IMR-90 (cell line): ENCODE measurements at regions of chr4 and their contacts with region 1.

Region 1: DNA sequence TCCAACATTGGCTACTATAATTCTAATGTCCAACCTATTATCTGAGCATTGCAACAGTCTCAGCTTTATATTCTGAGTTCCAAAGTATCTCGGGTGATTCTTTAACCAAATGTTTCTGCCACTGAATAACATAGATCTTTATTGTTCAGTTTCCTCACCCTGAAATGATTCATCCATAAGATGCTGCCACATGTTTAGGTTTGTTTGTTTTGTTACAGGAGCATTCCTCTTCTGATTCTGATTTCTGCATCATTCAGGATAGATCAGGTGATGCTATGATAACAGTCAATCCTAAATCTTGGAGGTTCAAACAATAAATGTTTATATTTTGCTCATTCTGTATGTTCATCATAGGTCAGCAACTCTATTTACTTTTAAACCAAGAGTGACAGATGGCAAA is 927.6 kb downstream of the PCDH7 start:
- DNase-seq: no peak
- ATAC-seq: no peak
- H3K4me3 ChIP-seq: no peak overlapping the region
- H3K27ac ChIP-seq: no peak overlapping the region
- H3K4me1 ChIP-seq: no peaks in the 10 kb centered on the region
- H3K27me3 ChIP-seq: no peaks in the 10 kb centered on the region
- CTCF ChIP-seq: no peak
- POLR2A ChIP-seq: no peak
- RAD21 ChIP-seq: no peak

Region 2: DNA sequence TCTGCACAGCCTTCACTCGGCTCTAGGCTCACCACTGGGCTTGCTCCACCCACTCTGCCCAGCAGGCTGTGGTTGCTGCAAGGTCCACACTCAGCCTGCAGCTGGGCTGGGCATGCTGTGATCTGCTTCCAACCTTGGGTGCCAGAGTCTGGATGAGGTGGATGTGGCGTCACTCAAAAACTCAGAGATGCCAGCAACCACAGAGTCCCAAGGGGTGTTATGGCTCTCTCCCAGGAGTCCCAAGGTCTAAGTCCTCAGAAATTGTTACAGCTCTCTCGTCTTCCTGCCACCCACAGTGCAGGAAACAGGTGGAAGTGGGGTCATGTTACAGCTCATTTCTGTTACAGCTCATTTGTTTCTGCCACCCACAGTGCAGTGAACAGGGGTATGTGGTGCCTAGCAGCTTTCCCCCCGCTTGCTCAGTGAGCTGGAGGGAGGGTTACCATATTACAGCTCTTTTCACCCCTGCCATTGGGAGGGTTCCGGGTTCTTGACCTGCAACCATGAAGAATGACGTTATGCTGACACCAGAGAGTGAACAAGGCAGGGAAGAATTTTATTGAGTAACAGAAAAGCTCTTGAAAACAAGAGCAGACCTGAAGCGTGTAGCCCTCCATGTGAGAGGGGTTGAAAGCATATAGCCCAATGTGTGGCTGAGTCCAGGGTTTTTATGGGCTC is 33.7 kb before region 1 on chr4:
- CTCF ChIA-PET with region 1: interaction called, 10 read pairs
- POLR2A ChIA-PET with region 1: no interaction called
- dilution Hi-C with region 1: no loop called
- in situ Hi-C with region 1: no loop called
- intact Hi-C with region 1: no loop called
- DNase-seq: no peak
- ATAC-seq: no peak
- H3K4me3 ChIP-seq: no peak overlapping the region
- H3K27ac ChIP-seq: no peak overlapping the region
- H3K4me1 ChIP-seq: no peaks in the 10 kb centered on the region
- H3K27me3 ChIP-seq: no peaks in the 10 kb centered on the region
- CTCF ChIP-seq: no peak
- POLR2A ChIP-seq: no peak
- RAD21 ChIP-seq: no peak